GM12878 (cell line): ENCODE measurements at regions of chr3 and their contacts with region 1.

Region 1: DNA sequence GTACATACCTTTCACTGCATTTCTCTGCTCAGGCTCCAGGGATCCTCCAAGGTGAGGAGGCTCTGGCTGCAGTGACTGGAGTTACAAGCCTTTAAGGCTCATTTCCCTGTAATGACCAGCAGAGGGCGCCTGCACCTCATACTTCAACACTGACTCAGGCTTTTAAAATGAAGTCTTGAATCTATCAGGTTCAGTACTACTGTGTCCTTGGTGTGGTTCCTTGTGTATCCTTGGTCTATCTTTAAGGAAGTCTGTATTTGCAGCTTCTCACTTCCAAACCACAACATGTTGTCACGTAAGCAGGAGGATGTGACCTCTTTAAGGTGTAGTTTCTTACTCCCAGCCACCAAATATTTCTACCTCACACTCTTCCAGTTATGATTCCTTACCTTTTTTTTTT is 122.5 kb upstream of the ZBED2 start:
- DNase-seq: no peak
- ATAC-seq: peak; percentile 99
- H3K4me3 ChIP-seq: no peak overlapping the region
- H3K27ac ChIP-seq: no peak overlapping the region
- H3K4me1 ChIP-seq: no peaks in the 10 kb centered on the region
- H3K27me3 ChIP-seq: no peaks in the 10 kb centered on the region
- CTCF ChIP-seq: peak; percentile 87 to 95 (median 92)
- EP300 ChIP-seq: no peak
- POLR2A ChIP-seq: no peak
- RAD21 ChIP-seq: peak; percentile 98

Region 2: GRCh38 chr3:111509310-111509709 is 208.3 kb before region 1 on chr3:
- CTCF ChIA-PET with region 1: no interaction called
- POLR2A ChIA-PET with region 1: no interaction called
- RAD21 ChIA-PET with region 1: no interaction called
- SMC1A ChIA-PET with region 1: no interaction called
- in situ Hi-C with region 1: no loop called
- intact Hi-C with region 1: no loop called
- DNase-seq: no peak
- ATAC-seq: no peak
- H3K4me3 ChIP-seq: no peak overlapping the region
- H3K27ac ChIP-seq: no peak overlapping the region
- H3K4me1 ChIP-seq: no peaks in the 10 kb centered on the region
- H3K27me3 ChIP-seq: no peaks in the 10 kb centered on the region
- CTCF ChIP-seq: no peak
- EP300 ChIP-seq: no peak
- POLR2A ChIP-seq: no peak
- RAD21 ChIP-seq: no peak

Region 3: GRCh38 chr3:111577794-111578685 is 139.6 kb before region 1 on chr3:
- CTCF ChIA-PET with region 1: interaction called, 44 read pairs
- POLR2A ChIA-PET with region 1: no interaction called
- RAD21 ChIA-PET with region 1: interaction called, 45 read pairs
- SMC1A ChIA-PET with region 1: interaction called, 34 read pairs
- in situ Hi-C with region 1: no loop called
- intact Hi-C with region 1: loop called (anchors 2 kb)
- DNase-seq: peak; percentile 39
- ATAC-seq: peak; percentile 94
- H3K4me3 ChIP-seq: no peak overlapping the region
- H3K27ac ChIP-seq: no peak overlapping the region
- H3K4me1 ChIP-seq: no peaks in the 10 kb centered on the region
- H3K27me3 ChIP-seq: no peaks in the 10 kb centered on the region; a peak in 1 of 4 replicates
- CTCF ChIP-seq: peak; percentile 33 to 58 (median 34); a peak in 5 of 6 replicates
- EP300 ChIP-seq: no peak
- POLR2A ChIP-seq: no peak
- RAD21 ChIP-seq: peak; percentile 58

Region 4: DNA sequence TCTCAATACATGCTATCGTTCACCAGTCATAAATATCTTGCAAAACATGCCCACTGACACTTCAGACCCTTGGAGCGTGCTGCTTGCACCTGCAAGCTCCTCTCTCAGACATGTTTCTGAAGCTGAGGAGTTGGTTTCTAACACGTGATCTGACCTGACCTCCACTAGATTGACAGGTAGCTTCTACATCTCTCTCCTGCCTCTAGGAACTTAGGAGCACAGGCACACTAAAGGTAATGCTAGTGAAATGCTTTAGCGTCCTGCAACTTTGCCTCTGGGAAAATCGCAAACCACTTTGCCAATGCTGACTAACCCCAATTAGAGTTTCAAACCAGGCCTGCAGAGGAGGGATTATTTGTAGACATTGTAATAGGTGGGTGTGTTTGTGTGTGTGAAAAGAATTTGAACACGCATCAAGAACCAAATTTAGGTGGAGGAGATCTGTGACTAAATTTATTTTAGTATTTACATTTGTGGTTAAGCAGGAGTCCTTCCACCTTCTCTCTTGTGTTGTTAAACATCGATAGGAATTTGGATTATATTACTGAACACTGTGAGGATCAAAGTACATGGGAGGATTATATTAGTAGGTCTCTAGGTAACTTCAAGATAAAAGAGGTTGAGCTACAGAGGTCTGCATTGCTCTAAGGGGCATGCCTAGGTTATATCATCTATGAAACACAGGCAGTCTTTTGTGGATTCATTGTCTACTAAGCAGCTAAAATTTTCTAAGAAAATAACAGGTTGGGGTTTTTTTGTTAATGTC is 35.8 kb before region 1 on chr3:
- CTCF ChIA-PET with region 1: interaction called, 37 read pairs
- POLR2A ChIA-PET with region 1: no interaction called
- RAD21 ChIA-PET with region 1: interaction called, 6 read pairs
- SMC1A ChIA-PET with region 1: interaction called, 12 read pairs
- in situ Hi-C with region 1: no loop called
- intact Hi-C with region 1: no loop called
- DNase-seq: no peak
- ATAC-seq: peak; percentile 9; the same call in 2 of the 3 replicates
- H3K4me3 ChIP-seq: no peak overlapping the region
- H3K27ac ChIP-seq: no peak overlapping the region
- H3K4me1 ChIP-seq: peaks cover 19% of the 10 kb centered on the region
- H3K27me3 ChIP-seq: no peaks in the 10 kb centered on the region
- CTCF ChIP-seq: no peak
- EP300 ChIP-seq: no peak
- POLR2A ChIP-seq: no peak
- RAD21 ChIP-seq: no peak

Region 5: GRCh38 chr3:111729087-111729846 is 11.7 kb after region 1 on chr3:
- CTCF ChIA-PET with region 1: interaction called, 17 read pairs
- POLR2A ChIA-PET with region 1: no interaction called
- RAD21 ChIA-PET with region 1: interaction called, 7 read pairs
- SMC1A ChIA-PET with region 1: interaction called, 6 read pairs
- in situ Hi-C with region 1: no loop called
- intact Hi-C with region 1: no loop called
- DNase-seq: no peak
- ATAC-seq: no peak
- H3K4me3 ChIP-seq: no peak overlapping the region
- H3K27ac ChIP-seq: no peak overlapping the region
- H3K4me1 ChIP-seq: no peaks in the 10 kb centered on the region
- H3K27me3 ChIP-seq: no peaks in the 10 kb centered on the region
- CTCF ChIP-seq: no peak
- EP300 ChIP-seq: no peak
- POLR2A ChIP-seq: no peak
- RAD21 ChIP-seq: no peak

Region 6: GRCh38 chr3:111895079-111895478 is 177.5 kb after region 1 on chr3:
- CTCF ChIA-PET with region 1: interaction called, 27 read pairs
- POLR2A ChIA-PET with region 1: no interaction called
- RAD21 ChIA-PET with region 1: interaction called, 17 read pairs
- SMC1A ChIA-PET with region 1: interaction called, 7 read pairs
- in situ Hi-C with region 1: no loop called
- intact Hi-C with region 1: no loop called
- DNase-seq: no peak
- ATAC-seq: peak; percentile 71
- H3K4me3 ChIP-seq: no peak overlapping the region
- H3K27ac ChIP-seq: no peak overlapping the region
- H3K4me1 ChIP-seq: no peaks in the 10 kb centered on the region
- H3K27me3 ChIP-seq: peaks cover 0 to 1% of the 10 kb centered on the region in 2 experiments; a peak in 1 of 4 replicates
- CTCF ChIP-seq: peak; percentile 11 to 37 (median 26); a peak in 2 of 6 replicates
- EP300 ChIP-seq: no peak
- POLR2A ChIP-seq: no peak
- RAD21 ChIP-seq: peak; percentile 36; the same call in 1 of the 2 replicates

Region 7: GRCh38 chr3:111978493-111979433 is 261.2 kb after region 1 on chr3 and contains the start of gene ABHD10:
- CTCF ChIA-PET with region 1: interaction called, 380 read pairs
- POLR2A ChIA-PET with region 1: interaction called, 5 read pairs
- RAD21 ChIA-PET with region 1: interaction called, 177 read pairs
- SMC1A ChIA-PET with region 1: interaction called, 424 read pairs
- in situ Hi-C with region 1: loop called (anchors 5 kb)
- intact Hi-C with region 1: no loop called
- DNase-seq: peak; percentile 92
- ATAC-seq: peak; percentile 97
- H3K4me3 ChIP-seq: peak within 1 kb of the TSS; percentile 89
- H3K27ac ChIP-seq: peak within 1 kb of the TSS; percentile 78
- H3K4me1 ChIP-seq: peaks cover 5% of the 10 kb centered on the region
- H3K27me3 ChIP-seq: no peaks in the 10 kb centered on the region
- CTCF ChIP-seq: no peak
- EP300 ChIP-seq: no peak
- POLR2A ChIP-seq: peak; percentile 99
- RAD21 ChIP-seq: no peak
- polyA plus RNA-seq, gene ABHD10: 12.3 to 16.7 TPM

Region 8: DNA sequence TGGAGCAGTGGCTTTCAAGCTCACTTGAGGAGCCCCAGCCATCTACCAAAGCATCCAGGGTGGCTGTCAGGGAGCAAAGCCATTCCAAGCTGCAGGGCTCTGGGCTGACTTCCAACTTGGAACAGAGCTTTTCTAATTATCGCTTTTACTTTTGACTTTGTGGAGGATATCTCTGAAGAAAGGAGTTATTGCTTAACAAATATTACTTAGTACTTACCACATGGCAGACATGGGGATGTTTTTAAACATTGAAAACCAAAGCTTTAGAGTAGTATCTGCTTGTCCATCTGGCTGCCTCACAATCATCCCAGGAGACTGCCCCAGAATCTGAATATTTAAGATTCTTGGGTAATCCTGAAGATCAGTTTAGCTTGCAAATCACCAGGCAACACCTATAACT is 290.0 kb after region 1 on chr3:
- CTCF ChIA-PET with region 1: interaction called, 161 read pairs
- POLR2A ChIA-PET with region 1: no interaction called
- RAD21 ChIA-PET with region 1: interaction called, 64 read pairs
- SMC1A ChIA-PET with region 1: interaction called, 123 read pairs
- in situ Hi-C with region 1: no loop called
- intact Hi-C with region 1: no loop called
- DNase-seq: no peak
- ATAC-seq: no peak
- H3K4me3 ChIP-seq: no peak overlapping the region
- H3K27ac ChIP-seq: no peak overlapping the region
- H3K4me1 ChIP-seq: no peaks in the 10 kb centered on the region
- H3K27me3 ChIP-seq: no peaks in the 10 kb centered on the region
- CTCF ChIP-seq: no peak
- EP300 ChIP-seq: no peak
- POLR2A ChIP-seq: no peak
- RAD21 ChIP-seq: no peak